ENCODE measurements at regions of chr1 and their contacts with region 1.

Region 1: DNA sequence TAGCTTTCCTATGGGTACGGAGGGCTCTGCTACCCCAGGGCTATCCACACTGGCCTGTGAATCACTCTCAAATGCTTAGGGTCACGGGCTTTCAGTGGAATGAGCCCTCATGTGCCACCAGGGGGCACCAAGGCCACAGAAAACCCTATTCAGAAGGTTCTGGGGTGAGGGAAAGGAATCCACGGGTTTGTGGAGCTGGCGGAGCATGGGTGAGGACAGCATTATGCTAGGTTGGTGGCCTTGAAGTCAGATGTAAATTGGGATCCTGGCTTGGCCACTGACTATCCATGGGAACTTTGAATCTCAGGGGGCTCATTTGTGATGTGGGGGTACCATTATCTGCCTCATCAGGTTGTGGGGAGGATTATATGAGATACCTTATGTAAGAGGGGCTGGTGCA is 5.1 kb upstream of the LAMTOR5 start:
- DNase-seq: peak; percentile 77
- H3K4me3 ChIP-seq: no peak overlapping the region
- H3K27ac ChIP-seq: no peak overlapping the region
- H3K4me1 ChIP-seq: peaks cover 0 to 16% (median 3%) of the 10 kb centered on the region in 4 donors
- H3K27me3 ChIP-seq: no peaks in the 10 kb centered on the region
- CTCF ChIP-seq: peak; percentile 52 to 65

Region 2: DNA sequence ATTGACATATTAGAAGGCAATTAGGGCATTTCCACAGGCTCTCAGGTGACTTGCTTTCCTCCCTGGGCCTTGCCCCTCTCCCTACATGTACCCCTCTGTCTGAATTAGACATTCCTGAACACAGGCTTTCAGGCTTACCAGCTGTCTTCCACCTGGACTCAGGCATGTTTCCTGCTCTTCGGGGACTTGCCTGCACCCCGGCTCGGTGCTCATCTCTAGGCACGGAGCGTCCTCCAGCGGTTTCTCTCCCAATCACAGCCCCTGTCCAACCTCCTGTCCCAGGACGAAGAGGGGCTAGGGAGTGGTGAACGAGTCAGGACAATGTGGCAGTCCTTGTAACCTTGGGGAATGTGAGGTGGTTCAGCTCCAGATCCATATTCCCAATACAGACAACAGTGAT is 42.6 kb after region 1 on chr1:
- intact Hi-C with region 1: loop called (anchors 5 kb)
- DNase-seq: no peak
- H3K4me3 ChIP-seq: no peak overlapping the region
- H3K27ac ChIP-seq: no peak overlapping the region
- H3K4me1 ChIP-seq: no peaks in the 10 kb centered on the region
- H3K27me3 ChIP-seq: peaks cover 0 to 30% of the 10 kb centered on the region in 2 donors
- CTCF ChIP-seq: no peak

Region 3: GRCh38 chr1:110746579-110747160 is 334.1 kb after region 1 on chr1:
- intact Hi-C with region 1: no loop called
- DNase-seq: no peak
- H3K4me3 ChIP-seq: no peak overlapping the region
- H3K27ac ChIP-seq: no peak overlapping the region
- H3K4me1 ChIP-seq: no peaks in the 10 kb centered on the region
- H3K27me3 ChIP-seq: peaks cover 0 to 5% of the 10 kb centered on the region in 2 donors
- CTCF ChIP-seq: no peak